CD14-positive monocyte (primary cell): ENCODE measurements at regions of chr19 and their contacts with region 1.

Region 1: GRCh38 chr19:44845612-44846454 is at the start of gene NECTIN2:
- DNase-seq: peak; percentile 89 to 95 (median 93)
- H3K4me3 ChIP-seq: peak within 1 kb of the TSS; percentile 47 to 94 (median 85)
- H3K4me3 Mint-ChIP-seq: peak within 1 kb of the TSS; percentile 96 to 98
- H3K27ac ChIP-seq: peak within 1 kb of the TSS; percentile 24 to 80
- H3K27ac Mint-ChIP-seq: peak within 1 kb of the TSS; percentile 76 to 99 (median 95)
- H3K4me1 ChIP-seq: peaks cover 45 to 55% of the 10 kb centered on the region in 2 donors
- H3K4me1 Mint-ChIP-seq: peaks cover 38% of the 10 kb centered on the region
- H3K27me3 ChIP-seq: peaks cover 0 to 3% of the 10 kb centered on the region in 2 donors
- H3K27me3 Mint-ChIP-seq: peaks cover 14 to 26% (median 26%) of the 10 kb centered on the region in 3 donors
- CTCF ChIP-seq: peak; percentile 3
- polyA plus RNA-seq, gene NECTIN2: 5.6 to 18.2 (median 9.3) TPM

Region 2: GRCh38 chr19:44653977-44654774 is 191.7 kb before region 1 on chr19:
- intact Hi-C with region 1: loop called (anchors 2 to 10 kb)
- DNase-seq: peak; percentile 78 to 87 (median 78)
- H3K4me3 ChIP-seq: no peak overlapping the region
- H3K4me3 Mint-ChIP-seq: no peak overlapping the region
- H3K27ac ChIP-seq: no peak overlapping the region
- H3K27ac Mint-ChIP-seq: peak overlapping the region in 4 of 7 donors; percentile 18 to 68 (median 62)
- H3K4me1 ChIP-seq: no peaks in the 10 kb centered on the region
- H3K4me1 Mint-ChIP-seq: peaks cover 8% of the 10 kb centered on the region
- H3K27me3 ChIP-seq: no peaks in the 10 kb centered on the region
- H3K27me3 Mint-ChIP-seq: peaks cover 0 to 2% (median 2%) of the 10 kb centered on the region in 3 donors
- CTCF ChIP-seq: peak; percentile 81

Region 3: GRCh38 chr19:44723952-44724319 is 121.9 kb before region 1 on chr19:
- intact Hi-C with region 1: loop called in 1 of 2 experiments (anchors 10 kb)
- DNase-seq: peak; percentile 85 to 89 (median 87)
- H3K4me3 ChIP-seq: no peak overlapping the region
- H3K4me3 Mint-ChIP-seq: peak overlapping the region in 1 of 2 donors; percentile 76
- H3K27ac ChIP-seq: peak overlapping the region in 1 of 2 donors; percentile 30
- H3K27ac Mint-ChIP-seq: peak overlapping the region in 6 of 7 donors; percentile 53 to 88 (median 72)
- H3K4me1 ChIP-seq: peaks cover 51 to 69% of the 10 kb centered on the region in 2 donors
- H3K4me1 Mint-ChIP-seq: peaks cover 68% of the 10 kb centered on the region
- H3K27me3 ChIP-seq: no peaks in the 10 kb centered on the region
- H3K27me3 Mint-ChIP-seq: peaks cover 1 to 9% (median 6%) of the 10 kb centered on the region in 3 donors
- CTCF ChIP-seq: peak; percentile 99

Region 4: GRCh38 chr19:44808463-44809371 is 37.1 kb before region 1 on chr19 and contains the start of gene BCAM:
- intact Hi-C with region 1: no loop called
- DNase-seq: peak in 1 of 3 donors; percentile 4
- H3K4me3 ChIP-seq: peak within 1 kb of the TSS in 2 of 3 experiments; percentile 11 to 57
- H3K4me3 Mint-ChIP-seq: peak within 1 kb of the TSS; percentile 65 to 84
- H3K27ac ChIP-seq: no peak within 1 kb of the TSS
- H3K27ac Mint-ChIP-seq: peak within 1 kb of the TSS in 2 of 7 donors; percentile 8 to 19
- H3K4me1 ChIP-seq: peaks cover 6 to 10% of the 10 kb centered on the region in 2 donors
- H3K4me1 Mint-ChIP-seq: peaks cover 12% of the 10 kb centered on the region
- H3K27me3 ChIP-seq: peaks cover 3 to 19% of the 10 kb centered on the region in 2 donors
- H3K27me3 Mint-ChIP-seq: peaks cover 21 to 32% (median 22%) of the 10 kb centered on the region in 3 donors
- CTCF ChIP-seq: no peak
- polyA plus RNA-seq, gene BCAM: 0.09 TPM in 1 of 3 donors, not detected in the others

Region 5: DNA sequence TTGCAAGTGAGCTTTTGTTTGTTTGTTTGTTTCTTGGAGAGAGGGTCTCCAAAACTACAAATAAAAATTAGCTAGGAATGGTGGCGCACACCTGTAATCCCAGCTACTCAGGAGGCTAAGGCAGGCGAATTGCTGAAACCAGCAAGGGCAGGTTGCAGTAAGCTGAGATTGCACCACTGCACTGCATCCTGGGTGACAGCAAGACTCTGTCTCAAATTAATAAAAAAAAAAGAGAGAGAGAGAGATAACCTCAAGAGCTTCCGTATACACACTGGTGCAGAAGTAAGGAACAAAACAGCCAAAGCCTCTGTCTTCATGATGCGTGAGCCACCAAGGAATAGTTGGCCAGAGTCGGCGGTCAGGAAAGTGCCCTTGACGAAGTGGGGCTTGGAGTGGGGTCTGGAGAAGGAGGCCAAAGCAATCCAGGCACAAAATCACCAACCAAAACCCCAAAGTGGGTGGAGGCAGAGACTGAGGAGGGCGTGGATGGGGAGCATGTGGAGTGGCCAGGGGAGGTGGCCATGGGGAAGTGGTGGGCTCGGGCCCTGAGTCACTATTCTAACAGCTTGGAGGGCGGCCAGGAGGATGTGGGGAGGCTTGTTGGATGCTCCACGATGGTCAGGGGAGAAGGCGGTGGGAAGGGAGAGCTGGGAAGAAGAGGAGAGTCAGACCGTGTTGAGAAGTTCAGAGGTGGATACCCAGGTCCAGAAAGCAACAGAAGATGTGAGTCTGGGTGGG is 24.1 kb after region 1 on chr19:
- intact Hi-C with region 1: loop called in 1 of 2 experiments (anchors 2 kb)
- DNase-seq: peak; percentile 60 to 78 (median 74)
- H3K4me3 ChIP-seq: peak overlapping the region in 1 of 3 experiments; percentile 47
- H3K4me3 Mint-ChIP-seq: peak overlapping the region; percentile 71 to 86
- H3K27ac ChIP-seq: peak overlapping the region; percentile 64 to 78
- H3K27ac Mint-ChIP-seq: peak overlapping the region; percentile 90 to 97 (median 92)
- H3K4me1 ChIP-seq: peaks cover 33 to 38% of the 10 kb centered on the region in 2 donors
- H3K4me1 Mint-ChIP-seq: peaks cover 37% of the 10 kb centered on the region
- H3K27me3 ChIP-seq: no peaks in the 10 kb centered on the region
- H3K27me3 Mint-ChIP-seq: peaks cover 0 to 4% (median 2%) of the 10 kb centered on the region in 3 donors
- CTCF ChIP-seq: no peak

Region 6: DNA sequence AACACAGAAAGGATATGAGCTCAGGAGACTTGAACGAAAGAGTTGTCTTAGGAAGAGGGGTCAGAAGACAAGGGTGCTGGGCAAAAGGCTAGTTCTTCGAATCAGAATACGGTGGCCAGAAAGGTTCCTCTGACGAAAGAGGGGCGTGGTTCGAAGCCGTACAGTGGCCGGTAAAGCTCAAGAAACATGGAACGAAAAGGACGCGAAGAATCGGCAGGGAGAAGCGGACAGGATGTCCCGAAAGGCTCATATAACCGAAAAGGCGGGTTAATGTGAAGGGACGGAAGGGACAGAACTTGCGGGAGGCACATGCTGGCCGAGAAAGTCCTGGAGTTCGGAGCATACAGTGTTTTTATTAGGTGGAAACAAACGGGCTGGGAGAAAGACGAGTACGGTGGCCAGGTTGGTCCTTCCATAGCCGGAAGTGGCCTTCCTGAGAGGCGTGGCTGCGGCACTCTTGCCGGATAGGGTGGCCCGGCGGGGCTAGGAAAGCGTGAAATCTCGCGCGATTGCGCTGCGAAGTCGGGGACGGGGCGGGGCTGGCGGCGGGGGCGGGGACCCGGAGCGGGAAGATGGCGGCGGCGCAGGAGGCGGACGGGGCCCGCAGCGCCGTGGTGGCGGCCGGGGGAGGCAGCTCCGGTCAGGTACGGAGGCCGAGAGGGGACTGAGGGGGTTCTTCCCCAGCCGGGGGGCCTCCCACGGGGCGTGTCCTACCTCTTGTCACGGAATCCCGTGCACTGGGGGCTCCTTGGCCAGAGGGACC is 109.2 kb after region 1 on chr19 and contains the start of gene CLPTM1:
- intact Hi-C with region 1: loop called in 1 of 2 experiments (anchors 5 kb)
- DNase-seq: peak; percentile 96 to 97 (median 97)
- H3K4me3 ChIP-seq: peak within 1 kb of the TSS; percentile 93 to 99 (median 94)
- H3K4me3 Mint-ChIP-seq: peak within 1 kb of the TSS; percentile 98 to 99
- H3K27ac ChIP-seq: peak within 1 kb of the TSS; percentile 89 to 93
- H3K27ac Mint-ChIP-seq: peak within 1 kb of the TSS; percentile 96 to 100 (median 100)
- H3K4me1 ChIP-seq: peaks cover 23 to 32% of the 10 kb centered on the region in 2 donors
- H3K4me1 Mint-ChIP-seq: peaks cover 35% of the 10 kb centered on the region
- H3K27me3 ChIP-seq: no peaks in the 10 kb centered on the region
- H3K27me3 Mint-ChIP-seq: peaks cover 0 to 2% (median 2%) of the 10 kb centered on the region in 3 donors
- CTCF ChIP-seq: no peak
- polyA plus RNA-seq, gene CLPTM1: 14.7 to 84.3 (median 20.0) TPM